Activated CD4-positive, alpha-beta memory T cell treated with anti-CD3 and anti-CD28 coated beads for 36 hours (primary cell): ENCODE measurements at regions of chr7 and their contacts with region 1.

Region 1: GRCh38 chr7:28298870-28299518 is 113.3 kb upstream of the CREB5 start:
- DNase-seq: no peak
- H3K4me3 Mint-ChIP-seq: no peak overlapping the region
- H3K27ac Mint-ChIP-seq: no peak overlapping the region
- H3K4me1 Mint-ChIP-seq: no peaks in the 10 kb centered on the region
- H3K27me3 Mint-ChIP-seq: peaks cover 21% of the 10 kb centered on the region

Region 2: GRCh38 chr7:28239823-28240204 is 59.2 kb before region 1 on chr7:
- CTCF ChIA-PET with region 1: no interaction called
- POLR2A ChIA-PET with region 1: no interaction called
- intact Hi-C with region 1: no loop called
- DNase-seq: peak; percentile 12
- H3K4me3 Mint-ChIP-seq: no peak overlapping the region
- H3K27ac Mint-ChIP-seq: no peak overlapping the region
- H3K4me1 Mint-ChIP-seq: peaks cover 9% of the 10 kb centered on the region
- H3K27me3 Mint-ChIP-seq: peaks cover 43% of the 10 kb centered on the region

Region 3: DNA sequence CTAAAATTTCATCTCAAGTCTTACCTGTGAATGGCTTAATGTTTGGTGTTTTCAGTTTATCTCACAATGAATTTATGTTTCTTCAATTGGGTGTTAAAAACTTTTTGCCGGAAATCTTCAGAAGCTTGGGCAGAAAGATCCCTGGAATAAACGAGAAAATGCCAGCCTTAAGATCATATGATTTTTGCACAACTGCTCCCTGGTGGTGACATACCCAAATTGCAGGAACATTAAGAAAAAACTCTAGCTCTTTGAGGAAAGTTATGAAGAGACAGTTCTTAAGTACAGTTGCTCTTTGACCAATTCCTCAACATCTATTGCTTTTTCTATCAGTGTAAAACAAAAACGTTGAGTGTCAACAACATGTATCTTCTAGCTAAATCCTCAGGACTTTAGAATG is 65.1 kb after region 1 on chr7:
- CTCF ChIA-PET with region 1: interaction called, 23 read pairs
- POLR2A ChIA-PET with region 1: no interaction called
- intact Hi-C with region 1: no loop called
- DNase-seq: no peak
- H3K4me3 Mint-ChIP-seq: no peak overlapping the region
- H3K27ac Mint-ChIP-seq: no peak overlapping the region
- H3K4me1 Mint-ChIP-seq: no peaks in the 10 kb centered on the region
- H3K27me3 Mint-ChIP-seq: peaks cover 10% of the 10 kb centered on the region

Region 4: DNA sequence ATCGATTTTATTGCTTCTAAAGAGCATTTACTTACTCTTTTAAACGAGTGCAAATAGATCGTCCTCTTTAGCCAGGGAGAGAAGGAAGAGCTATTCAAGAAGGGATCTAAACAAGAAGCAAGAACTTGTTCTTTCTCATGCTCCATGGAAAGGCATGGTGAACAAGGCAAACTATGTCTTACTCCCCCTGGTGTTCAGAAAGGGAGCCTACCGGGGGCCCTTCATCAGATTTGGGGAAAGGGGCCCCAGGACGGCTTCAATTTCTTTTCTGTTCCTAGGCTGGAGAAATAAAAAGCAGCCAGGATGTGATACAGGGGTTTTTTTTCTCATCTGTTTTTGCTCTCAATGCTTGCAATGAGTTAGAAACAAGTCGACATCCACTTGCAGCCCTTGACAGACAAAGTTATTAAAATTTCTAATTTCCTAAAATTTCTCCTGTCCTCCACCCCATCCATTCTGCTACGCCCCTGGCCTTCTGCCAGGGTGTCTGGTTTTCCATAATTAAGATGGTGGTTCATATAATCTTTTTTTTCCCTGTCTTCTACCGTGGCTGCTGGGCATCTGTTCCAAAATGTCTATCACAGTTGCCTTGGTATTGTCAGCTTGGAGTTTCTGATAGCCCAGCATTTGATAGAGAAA is 327.7 kb after region 1 on chr7:
- CTCF ChIA-PET with region 1: interaction called, 3 read pairs
- POLR2A ChIA-PET with region 1: no interaction called
- intact Hi-C with region 1: loop called (anchors 5 kb)
- DNase-seq: peak; percentile 18
- H3K4me3 Mint-ChIP-seq: no peak overlapping the region
- H3K27ac Mint-ChIP-seq: no peak overlapping the region
- H3K4me1 Mint-ChIP-seq: no peaks in the 10 kb centered on the region
- H3K27me3 Mint-ChIP-seq: peaks cover 5% of the 10 kb centered on the region

Region 5: GRCh38 chr7:28853834-28854749 is 555.1 kb after region 1 on chr7:
- CTCF ChIA-PET with region 1: interaction called, 3 read pairs
- POLR2A ChIA-PET with region 1: no interaction called
- intact Hi-C with region 1: loop called (anchors 5 kb)
- DNase-seq: peak; percentile 77
- H3K4me3 Mint-ChIP-seq: peak overlapping the region; percentile 29
- H3K27ac Mint-ChIP-seq: no peak overlapping the region
- H3K4me1 Mint-ChIP-seq: peaks cover 7% of the 10 kb centered on the region
- H3K27me3 Mint-ChIP-seq: peaks cover 49% of the 10 kb centered on the region